H1 (cell line): ENCODE measurements at regions of chr16 and their contacts with region 1.

Region 1: GRCh38 chr16:2770057-2770951 is 6.8 kb downstream of the ELOB start:
- DNase-seq: no peak
- H3K4me3 ChIP-seq: no peak overlapping the region
- H3K27ac ChIP-seq: 0 out of 2 replicates have a peak overlapping the region, but pooled peaks have one; percentile 16
- H3K4me1 ChIP-seq: peaks cover 0 to 3% (median under 1%) of the 10 kb centered on the region in 4 experiments; a peak in 3 of 7 replicates
- H3K27me3 ChIP-seq: no peaks in the 10 kb centered on the region
- CTCF ChIP-seq: peak; percentile 15 to 34 (median 22)
- EP300 ChIP-seq: no peak
- POLR2A ChIP-seq: peak in 1 of 2 experiments; percentile 66; a peak in 2 of 3 replicates
- RAD21 ChIP-seq: no peak; a peak in 1 of 4 replicates

Region 2: DNA sequence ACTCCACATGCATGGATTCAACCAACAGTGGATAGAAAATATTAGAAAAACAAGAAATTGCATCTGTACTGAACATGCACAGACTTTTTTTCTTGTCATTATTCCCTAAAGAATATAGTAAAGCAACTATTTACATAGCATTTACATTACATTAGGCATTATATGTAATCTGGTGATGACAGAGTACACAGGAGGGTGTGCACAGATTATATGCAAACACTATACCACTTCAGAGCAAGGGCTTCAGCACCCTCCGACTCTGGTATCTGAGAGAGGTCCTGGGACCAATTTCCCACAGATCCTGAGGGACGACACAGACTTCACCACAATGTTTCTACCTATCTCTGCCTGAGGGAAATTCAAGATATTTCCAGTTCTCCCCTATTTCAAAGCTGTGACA is 113.3 kb before region 1 on chr16:
- CTCF ChIA-PET with region 1: no interaction called
- POLR2A ChIA-PET with region 1: no interaction called
- DNase-seq: no peak
- H3K4me3 ChIP-seq: no peak overlapping the region
- H3K27ac ChIP-seq: no peak overlapping the region
- H3K4me1 ChIP-seq: no peaks in the 10 kb centered on the region
- H3K27me3 ChIP-seq: no peaks in the 10 kb centered on the region; a peak in 1 of 7 replicates
- CTCF ChIP-seq: no peak
- EP300 ChIP-seq: no peak
- POLR2A ChIP-seq: no peak
- RAD21 ChIP-seq: no peak

Region 3: GRCh38 chr16:2784951-2785635 is 14.8 kb after region 1 on chr16:
- CTCF ChIA-PET with region 1: no interaction called
- POLR2A ChIA-PET with region 1: interaction called, 35 read pairs
- DNase-seq: no peak
- H3K4me3 ChIP-seq: no peak overlapping the region; a peak in 1 of 8 replicates
- H3K27ac ChIP-seq: no peak overlapping the region
- H3K4me1 ChIP-seq: peaks cover 0 to 3% (median 2%) of the 10 kb centered on the region in 4 experiments; a peak in 1 of 7 replicates
- H3K27me3 ChIP-seq: peaks cover 0 to 3% (median 0%) of the 10 kb centered on the region in 4 experiments; a peak in 2 of 7 replicates
- CTCF ChIP-seq: no peak
- EP300 ChIP-seq: no peak
- POLR2A ChIP-seq: no peak
- RAD21 ChIP-seq: no peak